Endothelial cell of umbilical vein (primary cell): ENCODE measurements at regions of chr2 and their contacts with region 1.

Region 1: DNA sequence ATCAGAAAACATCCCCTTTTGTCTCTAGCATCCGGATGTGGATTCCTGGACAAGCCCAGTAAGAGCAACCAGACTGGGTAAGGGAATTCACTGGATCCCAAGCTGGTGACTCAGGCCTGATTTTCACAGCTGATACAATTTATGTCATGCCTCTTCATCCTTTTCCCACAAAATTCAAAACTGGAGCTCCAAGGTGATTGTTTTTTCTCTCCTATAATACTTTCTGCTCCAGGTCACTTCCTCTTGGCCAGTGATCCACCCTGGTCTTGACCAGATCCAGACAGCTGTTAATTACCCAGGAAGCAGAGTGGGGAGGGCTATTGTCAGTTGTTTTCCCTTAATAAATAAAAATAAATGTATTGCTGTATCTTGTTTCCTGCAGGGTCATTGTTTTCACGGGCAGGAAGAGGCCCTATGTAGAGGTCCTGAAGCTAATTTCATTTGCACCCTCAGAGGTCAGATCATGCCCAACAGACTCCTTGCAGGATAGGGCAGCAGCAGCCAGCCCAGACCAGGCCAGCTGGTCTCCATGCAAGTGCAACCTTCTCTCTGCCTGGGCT is 57.6 kb downstream of the EVA1A start:
- DNase-seq: peak; percentile 97
- H3K4me3 ChIP-seq: no peak overlapping the region
- H3K27ac ChIP-seq: peak overlapping the region; percentile 96
- H3K4me1 ChIP-seq: peaks cover 74% of the 10 kb centered on the region
- H3K27me3 ChIP-seq: no peaks in the 10 kb centered on the region
- CTCF ChIP-seq: no peak
- POLR2A ChIP-seq: peak; percentile 68

Region 2: GRCh38 chr2:75523313-75524275 is 20.5 kb after region 1 on chr2:
- CTCF ChIA-PET with region 1: interaction called, 5 read pairs
- POLR2A ChIA-PET with region 1: no interaction called
- dilution Hi-C with region 1: no loop called
- intact Hi-C with region 1: loop called (anchors 2 kb)
- DNase-seq: peak; percentile 31
- H3K4me3 ChIP-seq: no peak overlapping the region
- H3K27ac ChIP-seq: no peak overlapping the region
- H3K4me1 ChIP-seq: peaks cover 7% of the 10 kb centered on the region
- H3K27me3 ChIP-seq: no peaks in the 10 kb centered on the region
- CTCF ChIP-seq: no peak
- POLR2A ChIP-seq: no peak

Region 3: DNA sequence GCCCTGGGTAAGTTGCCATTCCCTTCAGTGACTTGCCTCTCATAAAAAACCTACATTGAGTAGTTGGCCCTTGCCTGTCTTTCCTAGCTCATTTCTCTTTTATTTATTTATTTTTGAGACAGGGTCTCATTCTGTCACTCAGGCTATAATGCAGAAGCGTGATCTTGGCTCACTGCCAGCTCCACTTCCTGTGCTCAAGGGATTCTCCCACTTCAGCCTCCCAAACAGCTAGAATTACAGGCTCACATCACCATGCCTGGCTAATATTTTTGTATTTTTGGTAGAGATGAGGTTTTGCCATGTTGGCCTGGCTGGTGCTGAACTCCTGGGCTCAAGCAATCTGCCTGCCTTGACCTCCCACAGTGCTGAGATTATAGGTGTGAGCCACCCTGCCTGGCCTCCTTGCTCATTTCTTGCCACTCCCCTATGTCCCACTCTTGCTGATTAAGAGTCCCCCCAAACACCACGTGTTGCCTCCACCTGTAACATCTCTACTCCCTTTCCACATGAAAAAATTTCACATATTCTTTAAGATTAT is 45.0 kb after region 1 on chr2:
- CTCF ChIA-PET with region 1: no interaction called
- POLR2A ChIA-PET with region 1: no interaction called
- dilution Hi-C with region 1: no loop called
- intact Hi-C with region 1: loop called (anchors 1 kb)
- DNase-seq: peak; percentile 34
- H3K4me3 ChIP-seq: no peak overlapping the region
- H3K27ac ChIP-seq: peak overlapping the region; percentile 51
- H3K4me1 ChIP-seq: peaks cover 12% of the 10 kb centered on the region
- H3K27me3 ChIP-seq: no peaks in the 10 kb centered on the region
- CTCF ChIP-seq: no peak
- POLR2A ChIP-seq: no peak

Region 4: DNA sequence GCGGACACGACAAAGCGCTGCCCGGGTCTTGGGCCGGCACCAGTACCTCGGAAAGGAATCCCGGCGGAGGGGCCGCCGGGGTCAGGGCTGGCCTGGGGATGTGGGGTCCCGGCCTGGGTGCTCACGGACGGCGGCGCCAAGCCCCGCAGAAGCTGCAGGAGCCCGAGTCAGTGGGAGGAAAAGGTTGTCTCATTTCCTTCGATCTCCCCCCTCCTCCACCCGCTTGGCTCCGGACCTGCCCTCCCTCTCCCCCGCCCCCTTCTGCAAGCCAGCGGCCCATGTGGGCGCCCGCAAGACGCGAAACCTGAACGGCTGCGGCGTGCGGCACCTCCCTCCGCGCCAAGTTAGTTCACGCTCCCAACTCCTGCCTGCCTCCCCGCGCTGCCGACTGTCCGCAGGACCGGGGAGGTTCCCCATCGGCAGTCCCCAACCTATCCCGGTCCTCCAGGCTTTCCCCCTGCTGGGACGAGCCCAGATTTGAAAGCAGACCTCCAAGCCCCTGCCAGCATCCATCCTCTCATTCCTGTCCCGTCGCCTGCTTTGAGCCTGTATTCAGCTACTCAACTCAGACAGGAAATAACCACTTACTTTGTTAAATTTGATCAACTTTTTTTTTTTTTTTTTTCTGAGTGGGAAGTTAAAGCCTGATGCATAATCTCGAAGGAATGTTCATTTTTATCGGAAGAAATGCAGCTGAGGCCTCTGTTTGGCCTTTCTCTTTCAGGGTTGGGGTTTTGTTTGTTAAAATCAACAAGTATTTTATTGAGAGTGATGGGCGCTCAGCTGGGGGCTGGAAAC is 57.8 kb after region 1 on chr2 and contains the start of gene EVA1A:
- CTCF ChIA-PET with region 1: interaction called, 22 read pairs
- POLR2A ChIA-PET with region 1: interaction called, 11 read pairs
- dilution Hi-C with region 1: no loop called
- intact Hi-C with region 1: loop called (anchors 1 kb)
- DNase-seq: peak; percentile 85
- H3K4me3 ChIP-seq: peak within 1 kb of the TSS; percentile 63 to 94 (median 91)
- H3K27ac ChIP-seq: peak within 1 kb of the TSS; percentile 72
- H3K4me1 ChIP-seq: peaks cover 35% of the 10 kb centered on the region
- H3K27me3 ChIP-seq: no peaks in the 10 kb centered on the region
- CTCF ChIP-seq: no peak
- POLR2A ChIP-seq: peak; percentile 78
- total RNA-seq, gene EVA1A: 59.7 and 66.5 TPM in 2 replicates

Region 5: DNA sequence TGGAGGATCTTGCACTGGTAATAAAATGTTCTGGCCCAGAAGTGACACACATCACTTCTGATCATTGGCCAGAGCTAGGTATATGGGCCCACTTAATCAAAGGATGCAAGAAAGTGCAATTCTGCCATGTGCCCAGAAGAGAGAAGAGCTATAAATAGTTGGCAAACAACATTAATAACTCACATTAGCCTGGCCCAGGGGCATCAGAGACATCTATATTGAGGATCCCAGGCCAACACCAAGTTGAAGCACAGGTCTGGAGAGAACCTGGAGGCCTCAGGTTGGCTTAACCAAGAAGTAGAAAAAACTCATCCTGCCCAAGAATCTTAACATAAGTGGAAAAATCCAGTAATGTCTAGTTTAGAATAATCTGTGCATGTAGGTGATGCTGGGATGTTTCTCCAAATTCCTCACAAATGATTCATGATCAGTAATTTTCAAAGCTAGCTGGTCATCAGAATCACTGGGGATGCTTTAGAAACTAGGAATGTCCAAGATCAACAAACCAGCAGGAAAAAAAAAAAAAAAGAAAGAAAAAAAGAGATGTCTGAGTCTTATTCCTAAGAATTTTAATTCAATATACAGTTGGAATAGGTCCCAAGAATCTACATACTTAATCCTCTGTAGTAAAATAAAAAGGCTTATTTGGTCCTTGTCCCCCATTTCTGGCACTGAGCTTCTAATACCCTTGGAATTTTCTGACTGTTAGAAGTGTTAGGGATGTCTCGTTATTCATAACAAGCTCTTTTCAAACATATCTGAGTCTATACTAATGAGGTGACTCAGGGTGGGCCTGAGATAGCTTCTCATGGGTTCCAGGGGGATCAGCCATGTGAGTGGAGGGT is 92.6 kb after region 1 on chr2:
- CTCF ChIA-PET with region 1: no interaction called
- POLR2A ChIA-PET with region 1: no interaction called
- dilution Hi-C with region 1: no loop called
- intact Hi-C with region 1: loop called (anchors 1 kb)
- DNase-seq: peak; percentile 64
- H3K4me3 ChIP-seq: no peak overlapping the region
- H3K27ac ChIP-seq: peak overlapping the region; percentile 63
- H3K4me1 ChIP-seq: peaks cover 3% of the 10 kb centered on the region
- H3K27me3 ChIP-seq: no peaks in the 10 kb centered on the region
- CTCF ChIP-seq: no peak
- POLR2A ChIP-seq: no peak

Region 6: DNA sequence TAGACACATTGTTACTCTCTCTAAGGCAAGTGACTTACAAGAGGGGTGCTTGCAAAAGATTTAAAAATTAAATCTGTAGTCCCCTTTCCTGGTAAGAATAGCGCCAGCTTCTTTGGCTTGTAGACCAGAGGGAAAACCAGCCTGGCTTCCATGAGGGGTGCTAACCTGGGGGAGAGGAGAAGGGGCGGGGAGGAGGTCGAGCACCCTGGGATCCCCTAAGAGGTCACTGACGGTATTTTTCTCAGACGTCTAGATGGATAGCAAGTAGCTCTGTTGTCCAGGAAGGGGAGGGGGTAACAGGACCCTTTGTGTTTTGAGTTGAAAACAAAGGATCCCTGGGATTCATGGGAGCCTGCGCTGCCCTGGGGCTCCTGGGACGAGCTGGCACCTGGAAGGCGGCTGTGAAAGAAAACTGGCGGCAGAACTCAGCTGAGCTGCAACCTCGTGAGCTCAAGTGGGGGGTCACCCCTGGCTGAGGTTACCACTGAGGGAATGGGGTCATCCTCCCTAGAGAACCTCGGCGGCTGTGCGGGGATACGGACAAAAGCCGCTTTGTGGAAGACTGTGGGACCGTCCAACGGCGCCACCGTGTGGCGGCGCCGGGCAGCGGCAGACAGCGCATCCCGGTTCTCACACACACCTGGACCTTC is 105.7 kb after region 1 on chr2:
- CTCF ChIA-PET with region 1: interaction called, 12 read pairs
- POLR2A ChIA-PET with region 1: interaction called, 4 read pairs
- dilution Hi-C with region 1: no loop called
- intact Hi-C with region 1: loop called (anchors 1 kb)
- DNase-seq: peak; percentile 60
- H3K4me3 ChIP-seq: no peak overlapping the region
- H3K27ac ChIP-seq: no peak overlapping the region
- H3K4me1 ChIP-seq: peaks cover 6% of the 10 kb centered on the region
- H3K27me3 ChIP-seq: peaks cover 7 to 14% of the 10 kb centered on the region in 2 experiments
- CTCF ChIP-seq: peak; percentile 97 to 99
- POLR2A ChIP-seq: no peak